IMR-90 (cell line): ENCODE measurements at regions of chr9 and their contacts with region 1.

Region 1: DNA sequence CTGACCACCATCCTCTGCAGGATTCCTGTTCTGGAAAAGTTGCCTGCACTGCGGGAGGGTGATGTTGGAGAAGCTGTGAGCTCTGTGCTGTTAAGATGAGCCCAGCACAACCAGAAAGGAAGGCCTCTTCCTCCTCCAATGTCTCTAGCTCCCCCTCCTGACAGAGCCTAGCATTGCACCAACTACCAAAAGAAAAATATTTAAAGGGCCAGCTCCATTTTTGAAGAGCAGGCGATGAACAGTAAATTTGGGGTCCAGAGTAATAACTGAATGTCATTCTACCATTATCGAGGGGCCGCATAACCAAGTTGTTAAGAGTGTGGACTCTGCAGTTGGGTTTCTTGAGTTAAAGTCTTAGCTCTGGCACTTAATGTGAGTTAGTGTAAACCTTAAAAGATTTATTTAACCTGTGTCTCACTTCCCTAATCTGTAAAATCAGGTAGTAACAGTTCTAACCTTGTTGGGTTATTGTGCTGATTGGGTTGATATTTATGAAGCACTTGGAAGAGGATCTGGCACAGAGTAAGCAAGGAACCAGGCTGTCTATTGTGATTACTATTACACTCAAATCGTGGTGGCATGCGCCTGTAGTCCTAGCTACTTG is 3.9 kb downstream of the TEX53 start:
- DNase-seq: peak; percentile 79
- ATAC-seq: peak; percentile 98
- H3K4me3 ChIP-seq: no peak overlapping the region
- H3K27ac ChIP-seq: no peak overlapping the region
- H3K4me1 ChIP-seq: peaks cover 4% of the 10 kb centered on the region
- H3K27me3 ChIP-seq: no peaks in the 10 kb centered on the region
- CTCF ChIP-seq: peak; percentile 98
- POLR2A ChIP-seq: peak; percentile 54; the same call in 1 of the 2 replicates
- RAD21 ChIP-seq: peak; percentile 98

Region 2: DNA sequence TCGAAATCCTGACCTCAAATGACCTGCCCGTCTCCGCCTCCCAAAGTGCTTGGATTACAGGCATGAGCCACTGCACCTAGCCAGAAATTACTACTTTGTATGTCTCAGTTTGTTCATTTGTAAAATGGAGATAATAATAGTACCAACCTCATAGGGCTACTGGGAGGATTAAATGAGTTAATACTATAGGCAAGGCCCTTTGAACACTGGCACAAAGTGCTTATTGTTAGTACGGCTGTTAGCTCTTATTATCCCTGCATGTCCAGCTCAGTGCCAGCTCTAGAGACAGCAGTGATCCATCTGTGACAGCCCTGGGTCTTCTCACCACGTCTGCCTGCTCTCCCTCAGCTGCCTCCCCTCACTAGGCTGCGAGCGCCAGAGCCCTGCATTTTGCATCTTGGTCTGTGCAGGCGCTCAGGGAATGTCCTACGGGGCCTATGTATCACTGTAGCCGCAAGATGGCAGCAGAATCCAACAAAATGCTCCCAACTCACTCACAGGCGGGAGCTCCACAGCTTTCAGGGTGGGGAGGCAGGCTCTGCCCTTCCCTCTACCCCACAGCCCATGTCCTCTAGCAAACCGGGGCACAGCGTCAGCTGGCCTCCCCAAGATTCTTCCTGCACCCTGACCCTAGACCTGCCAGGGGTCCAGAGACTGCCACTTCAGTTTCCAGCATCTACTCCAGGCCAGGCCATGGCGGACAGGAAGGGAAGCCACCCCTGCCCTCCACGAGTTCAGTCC is 248.2 kb before region 1 on chr9:
- CTCF ChIA-PET with region 1: interaction called, 24 read pairs
- POLR2A ChIA-PET with region 1: no interaction called
- dilution Hi-C with region 1: no loop called
- in situ Hi-C with region 1: loop called (anchors 5 kb)
- intact Hi-C with region 1: loop called (anchors 1 kb)
- DNase-seq: peak; percentile 78
- ATAC-seq: peak; percentile 99
- H3K4me3 ChIP-seq: no peak overlapping the region
- H3K27ac ChIP-seq: no peak overlapping the region
- H3K4me1 ChIP-seq: no peaks in the 10 kb centered on the region
- H3K27me3 ChIP-seq: peaks cover 5% of the 10 kb centered on the region; the same call in 1 of the 2 replicates
- CTCF ChIP-seq: peak; percentile 93
- POLR2A ChIP-seq: no peak
- RAD21 ChIP-seq: peak; percentile 95

Region 3: GRCh38 chr9:114434878-114435311 is 218.8 kb before region 1 on chr9:
- CTCF ChIA-PET with region 1: interaction called, 27 read pairs
- POLR2A ChIA-PET with region 1: no interaction called
- dilution Hi-C with region 1: no loop called
- in situ Hi-C with region 1: loop called (anchors 10 kb)
- intact Hi-C with region 1: loop called (anchors 1 kb)
- DNase-seq: peak; percentile 37
- ATAC-seq: peak; percentile 91
- H3K4me3 ChIP-seq: no peak overlapping the region
- H3K27ac ChIP-seq: no peak overlapping the region
- H3K4me1 ChIP-seq: no peaks in the 10 kb centered on the region
- H3K27me3 ChIP-seq: peaks cover 13% of the 10 kb centered on the region
- CTCF ChIP-seq: peak; percentile 69
- POLR2A ChIP-seq: no peak
- RAD21 ChIP-seq: peak; percentile 79

Region 4: DNA sequence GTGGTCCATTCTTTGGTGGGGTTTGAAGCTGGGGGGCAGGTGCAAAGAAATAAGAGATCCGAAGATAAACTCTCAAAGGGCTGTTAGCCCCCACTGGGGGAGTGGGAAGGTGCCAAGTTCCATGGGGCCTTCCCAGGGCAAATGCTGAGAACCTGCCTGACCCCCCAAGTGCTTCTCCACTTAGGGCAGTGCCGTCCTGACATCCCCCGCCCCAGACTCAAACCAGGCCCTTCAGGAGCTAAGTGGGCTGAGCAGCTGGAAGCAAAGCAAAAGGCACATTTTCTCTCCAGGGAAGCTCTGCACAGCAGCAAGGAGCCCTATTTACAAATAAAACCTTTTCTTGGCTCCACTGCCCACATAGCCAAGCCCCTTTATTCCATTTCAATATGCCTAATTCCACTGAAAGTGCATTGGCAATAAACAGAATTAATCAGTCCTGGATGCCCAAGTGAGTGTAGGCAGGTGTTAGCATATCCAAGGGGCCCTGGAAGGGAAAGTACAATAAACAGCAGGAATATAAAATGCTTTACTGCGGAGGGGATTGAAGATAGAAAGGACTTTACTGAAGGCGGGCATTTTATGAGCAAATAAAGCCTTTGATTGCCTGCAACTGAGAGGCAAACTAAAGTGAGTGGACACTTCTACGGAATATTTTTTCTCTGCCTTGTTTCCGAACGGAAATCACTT is 193.0 kb before region 1 on chr9:
- CTCF ChIA-PET with region 1: no interaction called
- POLR2A ChIA-PET with region 1: no interaction called
- dilution Hi-C with region 1: no loop called
- in situ Hi-C with region 1: no loop called
- intact Hi-C with region 1: no loop called
- DNase-seq: no peak
- ATAC-seq: no peak
- H3K4me3 ChIP-seq: no peak overlapping the region
- H3K27ac ChIP-seq: no peak overlapping the region
- H3K4me1 ChIP-seq: no peaks in the 10 kb centered on the region
- H3K27me3 ChIP-seq: no peaks in the 10 kb centered on the region; the same call in 1 of the 2 replicates
- CTCF ChIP-seq: no peak
- POLR2A ChIP-seq: no peak
- RAD21 ChIP-seq: no peak

Region 5: DNA sequence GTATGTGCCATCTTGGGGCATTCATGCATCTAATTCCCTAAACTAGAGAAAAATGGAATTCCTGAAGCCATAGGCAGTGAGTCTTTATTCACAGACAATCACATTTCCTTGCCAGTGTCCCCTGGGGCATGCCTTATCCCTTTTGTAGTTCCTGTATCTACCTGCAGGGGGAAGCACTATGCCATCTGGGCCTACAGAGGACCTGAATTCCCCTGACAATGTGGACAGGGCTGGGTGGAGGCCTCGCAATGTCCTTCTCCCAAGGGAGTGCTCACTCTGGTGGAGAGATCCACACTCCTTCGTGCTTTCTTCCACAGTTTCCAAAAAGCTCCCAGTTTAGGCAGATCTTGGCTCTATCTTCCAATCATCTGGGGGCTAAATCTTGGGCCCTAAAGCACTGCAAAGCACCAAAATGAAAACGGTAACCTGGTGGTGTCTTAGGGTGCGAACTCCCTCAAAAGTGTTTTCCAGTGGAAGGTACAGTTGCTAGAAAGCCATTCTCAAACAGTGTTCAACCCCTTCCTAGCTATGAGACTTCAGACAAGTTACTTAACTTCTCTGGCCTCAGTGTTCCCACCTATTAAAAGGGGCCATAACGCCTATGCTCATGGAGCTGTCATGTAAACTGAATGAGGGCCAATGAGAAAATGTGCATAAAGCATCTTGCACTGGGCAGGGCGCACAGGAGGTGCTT is 165.9 kb before region 1 on chr9:
- CTCF ChIA-PET with region 1: interaction called, 16 read pairs
- POLR2A ChIA-PET with region 1: no interaction called
- dilution Hi-C with region 1: no loop called
- in situ Hi-C with region 1: loop called (anchors 5 kb)
- intact Hi-C with region 1: loop called (anchors 1 kb)
- DNase-seq: peak; percentile 69
- ATAC-seq: peak; percentile 98
- H3K4me3 ChIP-seq: no peak overlapping the region
- H3K27ac ChIP-seq: no peak overlapping the region
- H3K4me1 ChIP-seq: peaks cover 4% of the 10 kb centered on the region
- H3K27me3 ChIP-seq: peaks cover 1% of the 10 kb centered on the region; the same call in 1 of the 2 replicates
- CTCF ChIP-seq: peak; percentile 86
- POLR2A ChIP-seq: 0 out of 2 replicates have a peak, but pooled peaks have one; percentile 35
- RAD21 ChIP-seq: peak; percentile 87

Region 6: DNA sequence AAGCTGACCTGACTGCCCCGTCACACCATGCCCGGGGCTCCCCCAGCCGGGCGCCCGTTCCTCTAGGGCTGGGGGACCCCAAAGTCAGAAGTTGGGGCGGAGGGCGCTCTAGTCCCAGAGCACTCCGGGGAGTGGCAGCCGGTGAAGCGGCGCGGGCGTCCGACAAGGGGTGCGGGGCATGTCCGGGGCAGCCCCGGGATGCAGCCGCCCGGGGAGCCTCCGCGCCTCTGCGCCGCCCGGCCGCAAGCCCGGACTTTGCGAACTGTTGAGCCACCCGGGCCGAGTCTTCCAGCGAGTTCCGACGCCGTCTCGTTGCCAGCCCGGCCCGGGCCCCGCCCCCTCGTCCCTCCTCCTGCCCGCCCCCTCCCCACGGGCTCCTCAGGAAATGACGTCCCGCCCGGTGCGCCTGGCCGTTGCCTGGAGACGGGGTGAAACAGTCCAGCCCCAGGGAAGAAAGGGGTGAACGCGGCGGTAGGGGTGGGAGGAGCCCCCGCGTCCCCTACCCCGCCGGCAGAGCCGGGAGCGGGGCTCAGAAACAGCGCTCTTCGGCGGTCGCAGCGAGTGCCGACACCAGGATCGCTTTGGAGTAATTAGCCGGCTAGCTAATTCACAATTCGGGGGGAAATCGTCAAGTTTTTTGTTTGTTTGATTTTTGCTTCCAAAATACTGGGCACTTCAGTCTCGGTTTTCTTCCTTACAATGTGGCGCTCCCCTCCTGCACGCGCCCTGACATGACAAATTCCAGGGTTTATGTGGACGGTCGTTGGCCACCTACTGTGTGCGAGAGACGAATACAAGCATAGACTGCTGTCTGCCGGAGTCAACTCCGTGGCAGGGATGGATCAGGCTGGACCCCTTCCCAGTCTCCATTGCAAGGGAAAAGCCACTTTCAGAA is 148.2 kb before region 1 on chr9 and contains the start of gene WHRN:
- CTCF ChIA-PET with region 1: interaction called, 10 read pairs
- POLR2A ChIA-PET with region 1: no interaction called
- dilution Hi-C with region 1: no loop called
- in situ Hi-C with region 1: no loop called
- intact Hi-C with region 1: loop called (anchors 5 kb)
- DNase-seq: peak; percentile 76
- ATAC-seq: peak; percentile 83
- H3K4me3 ChIP-seq: peak within 1 kb of the TSS; percentile 71
- H3K27ac ChIP-seq: no peak within 1 kb of the TSS
- H3K4me1 ChIP-seq: peaks cover 11% of the 10 kb centered on the region
- H3K27me3 ChIP-seq: peaks cover 36% of the 10 kb centered on the region
- CTCF ChIP-seq: peak; percentile 11; the same call in 1 of the 2 replicates
- POLR2A ChIP-seq: peak; percentile 87
- RAD21 ChIP-seq: no peak
- total RNA-seq, gene WHRN: 0.18 and 0.28 TPM in 2 replicates